Heart left ventricle (tissue), 16 donors: ENCODE measurements at regions of chr5 and their contacts with region 1.

Region 1: GRCh38 chr5:173984218-173984617 is 4.8 kb upstream of the C5orf47 start:
- DNase-seq: no peak
- ATAC-seq: peak; percentile 61 to 77 (median 73)
- H3K4me3 ChIP-seq: no peak overlapping the region
- H3K27ac ChIP-seq: no peak overlapping the region
- H3K4me1 ChIP-seq: no peaks in the 10 kb centered on the region
- H3K27me3 ChIP-seq: peaks cover 0 to 11% (median 0%) of the 10 kb centered on the region in 9 donors
- CTCF ChIP-seq: peak; percentile 7 to 53 (median 41)
- POLR2A ChIP-seq: no peak

Region 2: DNA sequence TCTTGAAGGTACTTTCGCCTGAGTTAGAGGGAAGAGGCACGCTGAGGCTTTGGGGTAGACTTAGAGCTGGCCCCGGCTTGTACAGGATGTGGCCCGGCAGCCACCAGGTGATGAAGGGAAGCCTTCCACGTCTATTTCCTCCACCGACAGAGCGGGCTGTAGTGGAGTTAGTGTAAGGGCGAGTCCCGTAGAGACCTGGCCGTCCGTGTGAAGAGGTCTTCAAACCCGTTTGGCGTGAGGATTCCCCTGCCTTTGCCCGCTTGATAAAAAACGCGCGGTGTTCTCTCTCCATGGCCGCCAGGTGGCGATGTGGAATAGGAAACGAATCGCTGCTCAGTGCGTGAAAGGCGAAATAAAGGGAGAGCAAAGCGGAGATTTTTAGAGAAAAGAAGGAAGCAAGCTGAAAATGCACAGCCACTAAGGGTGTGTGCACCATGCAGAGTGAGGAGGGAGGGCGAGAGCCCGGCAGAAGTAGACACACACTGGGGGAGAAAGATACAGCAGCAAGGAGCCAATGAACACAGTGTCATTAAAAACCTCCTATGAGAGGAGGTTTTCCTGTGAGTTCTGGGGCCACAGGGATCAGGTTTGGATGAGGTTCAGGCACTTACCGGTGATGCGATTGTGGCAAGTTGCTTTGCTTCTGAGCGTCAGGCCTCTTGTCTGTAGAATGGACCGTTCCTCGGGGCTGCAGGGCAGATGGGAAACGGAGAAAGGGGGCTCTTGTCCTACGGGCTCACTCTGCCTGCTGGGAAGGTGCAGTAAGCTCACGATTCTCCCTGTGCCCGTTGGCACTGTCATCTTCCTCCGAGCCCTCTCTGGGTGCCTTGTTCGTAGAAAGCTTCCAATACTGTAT is 690.2 kb before region 1 on chr5:
- intact Hi-C with region 1: loop called in 3 of 10 experiments (anchors 10 kb)
- DNase-seq: peak; percentile 60 to 86 (median 72)
- ATAC-seq: peak; percentile 11 to 65 (median 46)
- H3K4me3 ChIP-seq: peak overlapping the region in 5 of 12 donors; percentile 5 to 32 (median 11)
- H3K27ac ChIP-seq: no peak overlapping the region
- H3K4me1 ChIP-seq: peaks cover 0 to 21% (median 8%) of the 10 kb centered on the region in 12 donors
- H3K27me3 ChIP-seq: peaks cover 0 to 28% (median 0%) of the 10 kb centered on the region in 9 donors
- CTCF ChIP-seq: peak; percentile 77 to 96 (median 86)
- POLR2A ChIP-seq: no peak

Region 3: GRCh38 chr5:173302547-173303066 is 681.6 kb before region 1 on chr5:
- intact Hi-C with region 1: loop called in 4 of 10 experiments (anchors 10 kb)
- DNase-seq: no peak
- ATAC-seq: peak in 3 of 4 donors; percentile 32 to 47 (median 34)
- H3K4me3 ChIP-seq: no peak overlapping the region
- H3K27ac ChIP-seq: no peak overlapping the region
- H3K4me1 ChIP-seq: peaks cover 0 to 19% (median 0%) of the 10 kb centered on the region in 12 donors
- H3K27me3 ChIP-seq: no peaks in the 10 kb centered on the region
- CTCF ChIP-seq: no peak
- POLR2A ChIP-seq: no peak